ENCODE measurements at regions of chr6 and their contacts with region 1.

Region 1: DNA sequence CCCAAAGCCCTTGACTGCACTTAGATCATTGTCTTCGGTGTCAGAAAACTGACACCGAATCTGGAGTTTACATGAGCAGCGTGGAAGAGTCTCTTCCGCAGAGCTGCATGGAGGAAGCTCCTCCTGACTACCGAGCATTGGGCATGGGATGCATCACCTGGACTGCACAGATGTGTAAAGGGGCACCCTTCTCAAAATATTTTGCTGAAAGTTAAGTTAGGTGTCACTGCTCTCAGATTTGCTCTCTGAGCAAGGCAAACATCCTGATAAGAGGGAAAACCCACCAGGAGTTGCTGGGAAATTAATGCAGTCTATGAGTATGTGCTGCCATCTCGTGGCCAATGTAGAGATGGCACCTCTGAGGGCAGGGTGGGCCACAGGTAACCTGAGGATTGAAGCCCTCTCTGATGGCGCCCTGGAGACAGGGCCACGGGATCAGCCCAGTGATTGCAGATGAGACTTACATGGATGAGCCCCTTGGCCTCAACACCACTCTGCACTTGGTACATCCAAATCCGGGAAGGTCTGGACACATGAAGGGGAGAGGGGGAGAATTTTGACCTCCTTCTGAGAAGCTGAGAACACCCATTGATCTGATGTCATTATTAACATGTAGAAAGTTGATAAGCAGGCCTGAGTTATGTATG is 129.9 kb downstream of the LPA start:
- DNase-seq: peak; percentile 86
- H3K4me3 Mint-ChIP-seq: no peak overlapping the region
- H3K27ac Mint-ChIP-seq: no peak overlapping the region
- H3K4me1 Mint-ChIP-seq: no peaks in the 10 kb centered on the region
- H3K27me3 Mint-ChIP-seq: peaks cover 24% of the 10 kb centered on the region

Region 2: GRCh38 chr6:160137989-160138835 is 396.0 kb before region 1 on chr6:
- intact Hi-C with region 1: loop called (anchors 1 kb)
- DNase-seq: peak; percentile 89
- H3K4me3 Mint-ChIP-seq: no peak overlapping the region
- H3K27ac Mint-ChIP-seq: peak overlapping the region; percentile 35
- H3K4me1 Mint-ChIP-seq: peaks cover 15% of the 10 kb centered on the region
- H3K27me3 Mint-ChIP-seq: no peaks in the 10 kb centered on the region

Region 3: GRCh38 chr6:160167604-160168399 is 366.4 kb before region 1 on chr6:
- intact Hi-C with region 1: no loop called
- DNase-seq: peak; percentile 37
- H3K4me3 Mint-ChIP-seq: no peak overlapping the region
- H3K27ac Mint-ChIP-seq: no peak overlapping the region
- H3K4me1 Mint-ChIP-seq: no peaks in the 10 kb centered on the region
- H3K27me3 Mint-ChIP-seq: peaks cover 2% of the 10 kb centered on the region

Region 4: DNA sequence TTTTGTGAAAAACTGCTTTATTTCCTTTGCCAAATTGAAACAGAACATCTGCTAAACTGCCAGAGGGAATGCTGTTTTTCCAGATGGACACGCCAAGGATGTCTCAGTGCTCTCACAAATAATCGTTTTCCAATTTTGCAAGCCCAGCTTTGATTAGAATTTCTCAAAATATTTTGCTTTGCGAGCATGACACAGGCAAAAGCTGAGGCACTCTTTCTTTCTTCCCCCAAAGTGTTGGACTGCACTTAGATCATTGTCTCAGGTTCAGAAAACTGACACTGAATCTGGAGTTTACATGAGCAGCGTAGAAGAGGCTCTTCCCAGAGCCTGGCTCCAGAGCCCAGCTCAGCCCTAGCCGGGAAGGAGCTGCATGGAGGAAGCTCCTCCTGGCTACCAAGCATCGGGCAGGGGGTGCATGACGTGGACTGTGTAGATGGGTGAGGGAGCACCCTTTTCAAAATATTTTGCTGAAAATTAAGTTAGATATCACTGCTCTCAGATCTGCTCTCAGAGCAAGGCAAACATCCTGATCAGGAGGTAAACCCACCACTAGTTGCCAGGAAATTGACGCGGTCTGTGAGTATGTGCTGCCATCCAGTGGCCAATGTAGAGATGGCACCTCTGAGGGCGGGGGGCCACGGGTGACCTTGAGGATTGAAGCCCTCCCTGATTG is 78.5 kb before region 1 on chr6:
- intact Hi-C with region 1: loop called (anchors 1 kb)
- DNase-seq: peak; percentile 92
- H3K4me3 Mint-ChIP-seq: no peak overlapping the region
- H3K27ac Mint-ChIP-seq: no peak overlapping the region
- H3K4me1 Mint-ChIP-seq: peaks cover 26% of the 10 kb centered on the region
- H3K27me3 Mint-ChIP-seq: peaks cover 43% of the 10 kb centered on the region

Region 5: GRCh38 chr6:160520043-160520904 is 13.9 kb before region 1 on chr6:
- intact Hi-C with region 1: loop called (anchors 1 kb)
- DNase-seq: peak; percentile 93
- H3K4me3 Mint-ChIP-seq: peak overlapping the region; percentile 89
- H3K27ac Mint-ChIP-seq: peak overlapping the region; percentile 88
- H3K4me1 Mint-ChIP-seq: peaks cover 28% of the 10 kb centered on the region
- H3K27me3 Mint-ChIP-seq: peaks cover 51% of the 10 kb centered on the region

Region 6: DNA sequence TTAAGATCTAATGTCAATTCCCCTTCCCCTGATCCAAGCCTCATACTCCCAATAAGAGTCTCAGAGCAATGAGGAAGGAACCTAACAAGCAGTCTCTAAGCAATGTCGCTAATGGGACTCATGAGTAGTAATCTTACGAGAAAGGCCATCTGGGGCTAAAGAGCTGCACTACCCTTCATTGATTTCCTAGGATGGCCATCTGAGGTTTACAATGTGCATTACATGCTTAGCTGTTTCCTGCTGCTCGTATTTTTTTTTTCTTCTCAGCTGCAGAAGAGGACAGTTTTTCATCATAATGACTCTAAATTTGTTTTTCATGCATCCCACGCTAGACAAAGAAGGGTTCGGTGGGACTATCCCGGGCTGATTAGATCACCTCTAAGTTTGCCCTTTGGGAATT is 10.6 kb after region 1 on chr6:
- intact Hi-C with region 1: no loop called
- DNase-seq: no peak
- H3K4me3 Mint-ChIP-seq: no peak overlapping the region
- H3K27ac Mint-ChIP-seq: no peak overlapping the region
- H3K4me1 Mint-ChIP-seq: no peaks in the 10 kb centered on the region
- H3K27me3 Mint-ChIP-seq: peaks cover 8% of the 10 kb centered on the region